Left cardiac atrium (tissue), 4 donors: ENCODE measurements at regions of chr1 and their contacts with region 1.

Region 1: DNA sequence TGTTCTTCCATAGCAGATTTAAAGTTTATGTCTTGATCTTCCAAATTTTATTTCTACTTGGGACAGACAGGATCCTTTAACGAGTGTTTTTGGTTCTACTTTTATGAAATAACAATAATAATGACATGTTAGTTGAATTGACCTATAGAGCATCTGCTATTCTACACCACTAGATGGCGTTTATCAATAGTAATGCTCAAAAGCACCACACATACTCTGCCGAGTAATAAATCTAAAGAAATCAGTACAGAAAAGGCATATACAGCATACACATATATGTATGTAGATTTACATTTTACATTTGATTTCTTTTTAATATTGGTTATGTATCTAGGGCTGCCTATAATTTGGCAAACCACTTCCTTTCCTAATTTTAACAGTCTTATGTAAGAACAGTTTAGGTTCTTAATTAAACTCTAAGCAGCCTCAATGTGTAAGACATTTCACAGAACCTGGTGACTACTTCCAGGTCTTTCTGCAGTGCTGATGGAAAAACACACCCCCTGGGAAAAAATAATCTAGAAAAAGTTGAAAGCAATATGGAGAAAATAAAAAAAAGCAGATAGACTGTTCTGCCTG is 5.9 kb upstream of the SIPA1L2 start:
- DNase-seq: no peak
- ATAC-seq: peak; percentile 62 to 65

Region 2: GRCh38 chr1:232477728-232478127 is 158.1 kb before region 1 on chr1:
- intact Hi-C with region 1: no loop called
- DNase-seq: peak; percentile 34
- ATAC-seq: peak; percentile 85 to 89

Region 3: DNA sequence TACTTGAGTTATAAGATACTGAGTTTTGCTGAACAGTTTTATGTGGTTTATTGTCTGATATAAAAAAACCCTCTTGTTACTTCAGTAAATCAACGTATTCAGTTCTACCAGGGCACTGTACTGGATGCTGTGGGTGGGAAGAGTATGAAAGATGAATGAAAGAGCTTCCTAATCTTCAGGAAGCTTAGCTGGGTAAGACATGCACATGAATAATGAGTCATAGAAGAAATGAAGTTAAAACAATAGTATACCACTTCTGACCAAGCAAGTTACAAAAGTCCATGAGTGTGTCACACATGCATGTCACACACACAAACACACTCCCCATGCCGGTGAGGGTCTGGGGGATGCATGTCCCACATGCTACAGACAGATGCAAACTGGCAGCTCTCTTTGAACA is 111.8 kb before region 1 on chr1:
- intact Hi-C with region 1: no loop called
- DNase-seq: no peak
- ATAC-seq: no peak

Region 4: GRCh38 chr1:232786845-232787455 is 151.1 kb after region 1 on chr1:
- intact Hi-C with region 1: no loop called
- DNase-seq: no peak
- ATAC-seq: no peak

Region 5: GRCh38 chr1:232950197-232951176 is 314.6 kb after region 1 on chr1 and contains the start of gene NTPCR:
- intact Hi-C with region 1: loop called (anchors 5 to 10 kb)
- DNase-seq: peak; percentile 95
- ATAC-seq: peak; percentile 94 to 96
- total RNA-seq, gene NTPCR: 46.4 to 58.4 TPM

Region 6: GRCh38 chr1:233025157-233025915 is 389.5 kb after region 1 on chr1:
- intact Hi-C with region 1: loop called (anchors 2 to 5 kb)
- DNase-seq: peak; percentile 30
- ATAC-seq: peak in 1 of 2 donors; percentile 50

Region 7: GRCh38 chr1:233172227-233172626 is 536.4 kb after region 1 on chr1:
- intact Hi-C with region 1: loop called (anchors 2 to 5 kb)
- DNase-seq: no peak
- ATAC-seq: no peak

Region 8: DNA sequence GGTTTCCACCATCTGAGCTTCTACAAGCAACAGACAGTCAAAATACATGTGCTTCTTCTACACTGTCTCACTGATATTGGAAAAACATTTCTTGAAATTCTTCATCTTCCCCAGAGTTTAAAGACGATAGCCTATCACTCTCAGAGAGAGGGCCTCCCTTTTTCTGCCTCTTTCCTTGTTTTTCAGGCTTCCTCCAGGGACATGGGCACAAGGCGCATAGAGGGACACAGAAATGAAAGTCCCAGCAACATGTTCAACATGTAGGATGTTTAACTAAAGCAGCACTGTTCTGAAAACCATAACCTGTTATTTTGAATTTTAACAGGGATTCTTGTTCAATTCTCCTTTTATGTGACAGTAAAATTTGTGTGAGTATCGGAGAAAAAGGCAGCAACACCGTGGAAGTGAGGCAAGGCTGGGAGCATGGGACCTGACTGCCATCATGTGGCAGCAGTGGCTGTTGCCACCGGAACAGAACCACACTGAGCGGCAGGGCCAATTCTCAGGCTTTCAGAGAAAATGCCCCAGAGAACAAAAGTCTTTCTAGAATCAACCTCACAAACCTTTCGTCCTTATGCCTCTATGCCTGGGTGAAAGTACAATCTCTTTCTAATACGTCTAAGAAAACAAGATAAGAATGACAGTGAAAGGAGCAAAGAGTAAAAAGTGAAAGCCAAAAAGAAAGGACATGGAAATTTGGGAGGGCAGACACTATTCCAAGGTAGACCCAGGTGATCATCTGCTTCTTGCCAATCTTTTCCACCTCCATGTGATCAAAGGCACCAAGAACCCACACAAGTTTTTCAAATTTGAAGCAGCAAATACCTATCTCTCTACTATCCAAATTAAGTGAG is 605.2 kb after region 1 on chr1:
- intact Hi-C with region 1: loop called (anchors 2 to 5 kb)
- DNase-seq: peak; percentile 60
- ATAC-seq: peak; percentile 88 to 93